Aorta (tissue), 5 donors: ENCODE measurements at regions of chr20 and their contacts with region 1.

Region 1: DNA sequence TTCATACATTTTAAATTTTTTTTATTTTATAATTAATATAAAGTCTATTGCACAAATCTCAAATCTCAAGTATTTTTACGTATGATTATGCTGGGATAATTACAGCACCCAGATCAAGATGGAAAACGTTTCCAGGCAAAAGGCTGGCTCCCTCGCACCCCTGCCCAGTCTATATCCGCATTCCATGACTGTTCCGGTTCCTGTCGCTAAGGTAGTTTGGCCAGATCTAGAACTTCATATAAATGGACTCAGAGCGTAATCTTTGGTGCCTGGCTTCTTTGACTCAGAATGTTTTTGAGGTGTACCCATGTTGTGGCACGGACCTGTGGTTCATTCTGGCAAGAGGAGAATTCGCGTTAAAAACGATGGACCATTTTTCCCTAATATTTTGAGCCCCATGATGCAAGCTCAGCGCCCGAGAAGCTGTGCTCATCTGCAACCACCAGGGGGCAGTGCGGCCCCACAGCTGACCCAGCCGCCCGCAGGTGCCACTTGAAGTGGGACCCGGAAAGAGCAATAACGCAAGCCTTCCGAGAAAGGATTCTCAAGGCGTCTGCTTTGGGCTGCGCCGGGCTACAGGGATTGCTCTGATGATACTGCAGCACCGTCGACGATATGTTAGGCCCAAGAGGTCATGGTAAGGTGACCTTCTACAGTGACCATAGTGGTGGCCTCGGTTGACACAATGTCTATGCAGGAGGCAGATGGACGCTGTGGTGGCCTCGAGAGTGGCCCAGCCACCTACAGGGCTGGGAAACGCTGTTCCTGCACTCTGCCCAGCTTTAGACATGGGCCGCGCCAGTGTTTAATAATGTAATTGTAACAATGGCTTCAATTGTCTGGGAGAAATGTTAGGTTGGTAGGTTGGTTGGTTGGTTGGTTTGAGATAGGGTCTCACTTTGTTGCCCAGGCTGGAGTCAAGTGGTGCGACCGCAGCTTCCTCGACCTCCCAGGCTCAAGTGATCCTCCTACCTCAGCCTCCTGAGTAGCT is 160.1 kb downstream of the ZMYND8 start:
- DNase-seq: peak; percentile 80 to 93
- ATAC-seq: peak; percentile 88
- H3K4me3 ChIP-seq: no peak overlapping the region
- H3K27ac ChIP-seq: no peak overlapping the region
- H3K4me1 ChIP-seq: no peaks in the 10 kb centered on the region
- H3K27me3 ChIP-seq: no peaks in the 10 kb centered on the region

Region 2: GRCh38 chr20:46583411-46584214 is 612.8 kb before region 1 on chr20:
- intact Hi-C with region 1: no loop called
- DNase-seq: peak in 1 of 2 donors; percentile 57
- ATAC-seq: no peak
- H3K4me3 ChIP-seq: no peak overlapping the region
- H3K27ac ChIP-seq: no peak overlapping the region
- H3K4me1 ChIP-seq: no peaks in the 10 kb centered on the region
- H3K27me3 ChIP-seq: no peaks in the 10 kb centered on the region

Region 3: GRCh38 chr20:46767127-46767761 is 429.1 kb before region 1 on chr20:
- intact Hi-C with region 1: no loop called
- DNase-seq: no peak
- ATAC-seq: no peak
- H3K4me3 ChIP-seq: no peak overlapping the region
- H3K27ac ChIP-seq: no peak overlapping the region
- H3K4me1 ChIP-seq: no peaks in the 10 kb centered on the region
- H3K27me3 ChIP-seq: no peaks in the 10 kb centered on the region

Region 4: GRCh38 chr20:47379433-47380150 is 183.2 kb after region 1 on chr20:
- intact Hi-C with region 1: loop called (anchors 1 to 5 kb)
- DNase-seq: no peak
- ATAC-seq: no peak
- H3K4me3 ChIP-seq: no peak overlapping the region
- H3K27ac ChIP-seq: no peak overlapping the region
- H3K4me1 ChIP-seq: no peaks in the 10 kb centered on the region
- H3K27me3 ChIP-seq: no peaks in the 10 kb centered on the region